OCI-LY7 (cell line): ENCODE measurements at regions of chr7 and their contacts with region 1.

Region 1: DNA sequence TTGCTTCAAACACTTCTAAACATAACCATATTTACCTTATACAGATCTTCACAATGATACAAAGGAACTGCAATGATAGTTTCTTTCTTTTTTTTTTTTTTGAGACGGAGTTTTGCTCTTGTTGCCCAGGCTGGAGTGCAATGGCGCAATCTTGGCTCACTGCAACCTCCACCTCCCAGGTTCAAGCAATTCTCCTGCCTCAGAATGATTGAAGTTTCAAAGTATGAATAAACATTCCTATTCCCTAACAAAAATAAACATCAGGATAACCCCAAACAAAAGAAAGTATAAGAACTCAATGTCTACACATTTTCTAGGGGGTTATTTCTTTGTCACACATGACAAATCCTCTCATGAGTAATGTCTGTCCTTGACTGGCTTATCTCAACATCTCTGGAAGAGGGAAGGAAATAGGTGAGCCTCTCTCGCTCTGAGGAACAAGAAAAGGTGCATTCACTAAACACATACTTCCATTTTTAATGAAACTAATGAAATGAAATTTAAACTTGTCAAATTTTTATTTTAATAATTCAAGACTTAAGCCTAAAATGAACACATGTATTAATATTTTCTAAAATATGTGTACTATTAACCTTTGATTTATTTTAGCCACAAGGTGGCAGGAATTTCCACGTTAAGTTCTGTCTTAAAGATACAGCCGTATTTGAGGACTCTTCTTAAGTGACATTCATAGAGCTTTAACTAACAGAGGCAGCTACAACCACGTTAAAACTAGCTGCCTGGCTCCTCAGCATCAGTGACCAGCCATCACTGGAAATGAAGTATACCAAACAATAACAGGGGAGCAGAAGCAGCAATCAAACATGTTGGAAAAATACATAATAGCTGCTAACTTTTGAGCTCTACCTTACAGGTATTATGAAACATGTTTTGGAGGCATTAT is 58.3 kb downstream of the MALSU1 start:
- DNase-seq: peak; percentile 77
- H3K4me3 ChIP-seq: no peak overlapping the region
- H3K27ac ChIP-seq: peak overlapping the region; percentile 17
- H3K4me1 ChIP-seq: peaks cover 37% of the 10 kb centered on the region
- CTCF ChIP-seq: peak; percentile 87

Region 2: DNA sequence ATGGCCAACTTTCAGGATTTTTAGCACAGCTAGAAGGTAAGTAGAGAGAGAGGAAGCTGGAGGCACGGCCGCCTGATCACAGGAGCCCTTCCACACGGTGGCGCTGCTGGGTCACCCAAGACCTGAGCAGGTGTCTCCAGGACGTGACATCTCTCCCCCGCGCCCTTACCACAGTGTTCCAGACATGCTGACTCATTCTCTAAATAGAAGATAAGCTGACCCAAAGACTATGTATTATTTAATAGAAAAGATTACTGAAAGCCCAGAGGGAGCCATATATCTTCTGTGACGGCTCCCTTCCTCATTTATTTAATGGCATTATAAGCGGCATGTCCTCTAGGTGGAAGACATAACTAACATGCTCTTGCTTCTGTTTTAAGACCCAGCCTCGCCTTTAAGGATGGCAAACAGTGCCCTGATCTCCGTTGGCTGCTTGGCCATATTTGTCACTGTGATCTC is 84.3 kb before region 1 on chr7:
- CTCF ChIA-PET with region 1: interaction called, 5 read pairs
- POLR2A ChIA-PET with region 1: no interaction called
- intact Hi-C with region 1: loop called (anchors 5 kb)
- DNase-seq: peak; percentile 93
- H3K4me3 ChIP-seq: peak overlapping the region; percentile 57
- H3K27ac ChIP-seq: peak overlapping the region; percentile 7
- H3K4me1 ChIP-seq: peaks cover 15% of the 10 kb centered on the region
- CTCF ChIP-seq: peak; percentile 95

Region 3: DNA sequence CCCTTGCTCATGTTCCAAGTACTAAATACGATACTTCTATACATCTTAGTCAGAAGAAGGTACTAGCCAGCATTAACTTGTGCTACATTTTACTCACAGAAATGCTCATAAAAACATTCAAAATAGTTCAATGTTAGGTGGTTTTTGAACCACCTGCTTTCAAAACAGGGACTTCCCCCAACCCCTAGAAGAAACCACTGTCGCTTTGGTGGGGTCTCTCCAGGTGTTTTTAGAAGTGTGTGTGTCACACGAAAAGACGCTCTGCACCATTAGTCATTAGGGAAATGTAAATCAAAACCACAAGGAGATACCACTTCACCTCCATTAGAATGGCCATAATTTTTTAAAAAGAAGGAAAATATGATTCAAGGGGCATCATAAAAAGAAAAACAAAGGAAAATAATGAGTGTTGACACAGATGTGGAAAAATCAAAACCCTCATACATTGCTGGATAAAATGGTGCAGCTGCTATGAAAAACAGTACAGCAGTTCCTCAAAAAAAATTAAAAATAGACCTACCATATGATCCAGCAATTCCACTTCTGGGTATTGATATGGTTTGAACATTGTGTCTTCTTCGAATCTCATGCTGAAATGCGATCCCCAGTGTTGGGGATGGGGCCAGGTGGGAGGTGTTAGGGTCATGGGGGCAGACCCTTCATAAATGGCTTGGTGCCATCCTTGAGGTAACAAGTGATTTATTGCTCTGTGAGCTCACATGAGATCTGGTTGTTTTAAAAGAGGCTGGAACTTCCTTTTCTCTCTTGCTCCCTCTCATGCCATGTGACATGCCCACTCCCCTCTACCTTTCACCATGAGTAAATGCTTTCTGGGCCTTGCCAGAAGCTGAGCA is 15.9 kb after region 1 on chr7:
- CTCF ChIA-PET with region 1: interaction called, 6 read pairs
- POLR2A ChIA-PET with region 1: interaction called, 33 read pairs
- intact Hi-C with region 1: no loop called
- DNase-seq: peak; percentile 92
- H3K4me3 ChIP-seq: peak overlapping the region; percentile 51
- H3K27ac ChIP-seq: peak overlapping the region; percentile 94
- H3K4me1 ChIP-seq: peaks cover 75% of the 10 kb centered on the region
- CTCF ChIP-seq: no peak

Region 4: DNA sequence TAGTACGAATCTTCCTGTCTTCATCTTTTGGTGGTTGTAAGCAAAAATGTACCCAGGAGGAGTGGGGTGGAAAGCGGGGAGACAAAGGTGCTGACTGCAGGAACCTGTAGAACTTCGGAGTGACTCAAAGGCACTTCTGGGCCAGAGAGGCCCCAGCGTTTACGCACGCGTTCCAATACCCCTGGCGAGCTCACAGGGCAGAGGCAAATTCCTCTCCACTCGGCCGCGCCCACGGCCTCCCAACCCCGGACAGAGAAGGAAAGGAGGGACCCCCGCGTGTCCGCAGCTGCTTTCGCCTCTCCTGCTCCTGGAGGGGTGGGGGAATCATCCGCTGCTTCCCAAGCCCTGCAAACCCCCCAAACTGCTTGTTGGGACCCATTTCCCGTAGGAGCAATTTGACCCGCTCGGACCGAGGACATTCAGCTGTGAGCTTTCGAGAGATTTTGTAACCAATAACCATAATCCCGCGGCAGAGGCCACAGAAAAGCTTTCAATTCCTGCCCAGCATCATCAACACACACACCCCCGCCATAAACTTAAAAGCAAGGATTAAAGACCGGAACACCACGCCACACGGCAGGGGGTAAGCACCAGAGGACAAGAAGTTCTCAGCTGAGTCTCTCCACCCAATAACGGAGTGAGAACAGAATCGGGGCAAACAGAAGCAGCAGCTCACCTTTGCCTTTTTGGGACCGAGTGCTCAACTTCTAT is 110.5 kb after region 1 on chr7:
- CTCF ChIA-PET with region 1: interaction called, 7 read pairs
- POLR2A ChIA-PET with region 1: interaction called, 14 read pairs
- intact Hi-C with region 1: no loop called
- DNase-seq: peak; percentile 70
- H3K4me3 ChIP-seq: peak overlapping the region; percentile 85
- H3K27ac ChIP-seq: peak overlapping the region; percentile 90
- H3K4me1 ChIP-seq: peaks cover 44% of the 10 kb centered on the region
- CTCF ChIP-seq: no peak